ENCODE measurements at regions of chr12 and their contacts with region 1.

Region 1: GRCh38 chr12:9813821-9814809 is 13.2 kb upstream of the KLRF1 start:
- DNase-seq: peak; percentile 92 to 95
- ATAC-seq: peak; percentile 93 to 97 (median 94)
- H3K4me3 ChIP-seq: peak overlapping the region; percentile 47
- H3K4me3 Mint-ChIP-seq: peak overlapping the region; percentile 92
- H3K27ac ChIP-seq: peak overlapping the region; percentile 75
- H3K27ac Mint-ChIP-seq: peak overlapping the region; percentile 89 to 98
- H3K4me1 ChIP-seq: peaks cover 21% of the 10 kb centered on the region
- H3K4me1 Mint-ChIP-seq: peaks cover 49 to 54% of the 10 kb centered on the region in 2 donors
- H3K27me3 ChIP-seq: peaks cover 4% of the 10 kb centered on the region
- H3K27me3 Mint-ChIP-seq: peaks cover 0 to 9% of the 10 kb centered on the region in 2 donors
- CTCF ChIP-seq: peak; percentile 89

Region 2: GRCh38 chr12:9381619-9382018 is 432.5 kb before region 1 on chr12:
- intact Hi-C with region 1: no loop called
- DNase-seq: no peak
- ATAC-seq: no peak
- H3K4me3 ChIP-seq: no peak overlapping the region
- H3K4me3 Mint-ChIP-seq: no peak overlapping the region
- H3K27ac ChIP-seq: no peak overlapping the region
- H3K27ac Mint-ChIP-seq: no peak overlapping the region
- H3K4me1 ChIP-seq: no peaks in the 10 kb centered on the region
- H3K4me1 Mint-ChIP-seq: peaks cover 0 to 3% of the 10 kb centered on the region in 2 donors
- H3K27me3 ChIP-seq: no peaks in the 10 kb centered on the region
- H3K27me3 Mint-ChIP-seq: no peaks in the 10 kb centered on the region
- CTCF ChIP-seq: no peak

Region 3: GRCh38 chr12:9906873-9907272 is 92.8 kb after region 1 on chr12:
- intact Hi-C with region 1: loop called (anchors 5 kb)
- DNase-seq: peak in 1 of 2 donors; percentile 76
- ATAC-seq: peak; percentile 90 to 99 (median 94)
- H3K4me3 ChIP-seq: no peak overlapping the region
- H3K4me3 Mint-ChIP-seq: peak overlapping the region; percentile 72
- H3K27ac ChIP-seq: no peak overlapping the region
- H3K27ac Mint-ChIP-seq: peak overlapping the region; percentile 60 to 80
- H3K4me1 ChIP-seq: peaks cover 3% of the 10 kb centered on the region
- H3K4me1 Mint-ChIP-seq: peaks cover 31 to 32% of the 10 kb centered on the region in 2 donors
- H3K27me3 ChIP-seq: no peaks in the 10 kb centered on the region
- H3K27me3 Mint-ChIP-seq: no peaks in the 10 kb centered on the region
- CTCF ChIP-seq: no peak

Region 4: DNA sequence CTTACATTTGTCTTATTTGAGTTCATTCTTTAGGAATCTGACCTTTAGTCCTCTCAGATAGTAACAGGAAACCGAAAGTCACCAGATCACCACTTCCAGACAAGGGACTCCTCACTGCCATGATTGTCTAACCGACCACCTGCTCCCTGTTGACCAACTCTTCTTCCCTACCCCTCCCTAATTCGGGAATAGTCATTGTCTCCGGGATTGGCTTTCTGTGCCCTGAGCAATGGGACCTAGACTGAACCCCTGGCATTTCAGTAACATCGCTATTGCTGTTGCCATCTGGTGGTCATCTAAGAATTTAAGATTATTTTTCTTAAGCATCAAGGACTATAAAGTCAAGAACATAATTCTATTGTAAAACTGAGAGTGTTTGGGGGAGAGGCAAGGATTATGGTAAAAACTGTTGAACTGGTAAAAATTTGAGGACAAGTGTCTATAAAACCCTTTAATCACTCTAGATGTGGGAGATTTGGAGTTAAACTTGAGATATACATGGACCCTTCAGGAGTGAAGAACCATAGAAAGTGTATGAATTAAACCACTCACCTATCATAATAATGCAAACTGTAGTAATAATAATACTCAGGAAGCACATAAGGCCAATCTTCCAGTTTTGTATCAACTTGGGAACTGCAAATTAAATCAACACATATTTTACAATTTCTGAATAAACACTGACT is 111.7 kb after region 1 on chr12:
- intact Hi-C with region 1: loop called (anchors 1 kb)
- DNase-seq: peak in 1 of 2 donors; percentile 73
- ATAC-seq: peak; percentile 66 to 75 (median 72)
- H3K4me3 ChIP-seq: no peak overlapping the region
- H3K4me3 Mint-ChIP-seq: peak overlapping the region; percentile 83
- H3K27ac ChIP-seq: no peak overlapping the region
- H3K27ac Mint-ChIP-seq: peak overlapping the region; percentile 64 to 76
- H3K4me1 ChIP-seq: peaks cover 2% of the 10 kb centered on the region
- H3K4me1 Mint-ChIP-seq: peaks cover 5 to 7% of the 10 kb centered on the region in 2 donors
- H3K27me3 ChIP-seq: no peaks in the 10 kb centered on the region
- H3K27me3 Mint-ChIP-seq: peaks cover 6 to 11% of the 10 kb centered on the region in 2 donors
- CTCF ChIP-seq: peak; percentile 55

Region 5: DNA sequence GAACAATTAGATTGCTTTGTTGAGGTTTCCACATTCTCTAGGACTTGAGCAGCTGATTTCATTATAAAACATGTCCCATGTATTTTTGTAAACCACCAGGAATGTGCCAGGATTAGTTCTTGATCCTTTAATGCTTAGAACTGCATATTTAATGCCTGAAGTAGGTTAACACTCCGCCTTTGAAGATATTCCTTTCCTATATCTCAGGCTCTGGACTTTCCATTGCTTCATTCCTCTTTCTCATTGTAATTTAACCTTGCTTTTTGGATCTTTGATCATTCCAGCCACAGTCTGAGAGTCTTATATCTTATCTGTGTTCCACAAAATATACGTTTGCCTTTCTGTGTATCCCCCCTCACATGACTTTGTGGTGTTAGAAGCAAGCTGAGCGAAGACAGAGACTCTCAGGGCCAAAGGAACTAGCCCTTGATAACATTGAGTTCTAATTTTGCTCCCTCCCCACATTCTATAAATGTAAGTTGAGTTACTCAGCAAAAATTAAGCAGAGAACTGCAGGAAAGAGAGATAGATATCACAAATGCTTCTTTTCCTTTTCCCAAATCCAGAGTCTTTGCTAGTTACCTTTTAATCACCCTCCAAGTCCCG is 187.2 kb after region 1 on chr12:
- intact Hi-C with region 1: loop called (anchors 10 kb)
- DNase-seq: no peak
- ATAC-seq: no peak
- H3K4me3 ChIP-seq: no peak overlapping the region
- H3K4me3 Mint-ChIP-seq: no peak overlapping the region
- H3K27ac ChIP-seq: no peak overlapping the region
- H3K27ac Mint-ChIP-seq: no peak overlapping the region
- H3K4me1 ChIP-seq: no peaks in the 10 kb centered on the region
- H3K4me1 Mint-ChIP-seq: peaks cover 7% of the 10 kb centered on the region in 2 donors
- H3K27me3 ChIP-seq: no peaks in the 10 kb centered on the region
- H3K27me3 Mint-ChIP-seq: peaks cover 6 to 7% of the 10 kb centered on the region in 2 donors
- CTCF ChIP-seq: no peak

Region 6: DNA sequence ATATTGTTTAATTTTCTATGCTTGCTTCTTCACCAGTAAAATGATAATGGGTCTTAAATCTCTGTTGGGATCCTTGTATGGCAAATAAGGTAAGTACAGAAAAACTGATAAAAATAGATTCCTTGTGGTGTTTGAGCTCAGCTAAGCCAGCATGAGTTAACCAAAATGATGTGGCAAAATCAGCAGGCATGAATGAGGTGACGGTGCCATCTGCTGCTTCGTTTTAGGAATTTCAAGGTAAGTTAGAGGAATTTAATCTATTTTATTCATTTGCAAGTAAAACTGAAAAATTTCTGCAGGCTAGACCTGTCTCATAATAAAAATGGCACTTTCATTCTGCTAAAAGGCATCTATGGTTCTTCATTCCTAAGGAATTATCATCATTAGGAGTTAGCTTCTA is 325.9 kb after region 1 on chr12:
- intact Hi-C with region 1: loop called (anchors 1 kb)
- DNase-seq: peak in 1 of 2 donors; percentile 74
- ATAC-seq: peak; percentile 62 to 66 (median 63)
- H3K4me3 ChIP-seq: no peak overlapping the region
- H3K4me3 Mint-ChIP-seq: no peak overlapping the region
- H3K27ac ChIP-seq: no peak overlapping the region
- H3K27ac Mint-ChIP-seq: no peak overlapping the region
- H3K4me1 ChIP-seq: no peaks in the 10 kb centered on the region
- H3K4me1 Mint-ChIP-seq: no peaks in the 10 kb centered on the region
- H3K27me3 ChIP-seq: peaks cover 4% of the 10 kb centered on the region
- H3K27me3 Mint-ChIP-seq: peaks cover 13 to 16% of the 10 kb centered on the region in 2 donors
- CTCF ChIP-seq: peak; percentile 60